Spleen (tissue), 13 donors: ENCODE measurements at regions of chr16 and their contacts with region 1.

Region 1: GRCh38 chr16:8567750-8568617 is 22.3 kb downstream of the TMEM114 start:
- DNase-seq: peak; percentile 86
- H3K4me3 ChIP-seq: no peak overlapping the region
- H3K27ac ChIP-seq: no peak overlapping the region
- H3K4me1 ChIP-seq: peaks cover 0 to 8% (median 4%) of the 10 kb centered on the region in 6 donors
- H3K27me3 ChIP-seq: peaks cover 0 to 39% (median 7%) of the 10 kb centered on the region in 7 donors
- CTCF ChIP-seq: peak; percentile 93 to 98 (median 98)
- POLR2A ChIP-seq: no peak

Region 2: GRCh38 chr16:8880839-8881510 is 313.0 kb after region 1 on chr16:
- intact Hi-C with region 1: loop called (anchors 5 kb)
- DNase-seq: peak; percentile 19
- H3K4me3 ChIP-seq: no peak overlapping the region
- H3K27ac ChIP-seq: no peak overlapping the region
- H3K4me1 ChIP-seq: peaks cover 0 to 23% (median 11%) of the 10 kb centered on the region in 6 donors
- H3K27me3 ChIP-seq: peaks cover 0 to 39% (median 0%) of the 10 kb centered on the region in 7 donors
- CTCF ChIP-seq: no peak
- POLR2A ChIP-seq: no peak

Region 3: DNA sequence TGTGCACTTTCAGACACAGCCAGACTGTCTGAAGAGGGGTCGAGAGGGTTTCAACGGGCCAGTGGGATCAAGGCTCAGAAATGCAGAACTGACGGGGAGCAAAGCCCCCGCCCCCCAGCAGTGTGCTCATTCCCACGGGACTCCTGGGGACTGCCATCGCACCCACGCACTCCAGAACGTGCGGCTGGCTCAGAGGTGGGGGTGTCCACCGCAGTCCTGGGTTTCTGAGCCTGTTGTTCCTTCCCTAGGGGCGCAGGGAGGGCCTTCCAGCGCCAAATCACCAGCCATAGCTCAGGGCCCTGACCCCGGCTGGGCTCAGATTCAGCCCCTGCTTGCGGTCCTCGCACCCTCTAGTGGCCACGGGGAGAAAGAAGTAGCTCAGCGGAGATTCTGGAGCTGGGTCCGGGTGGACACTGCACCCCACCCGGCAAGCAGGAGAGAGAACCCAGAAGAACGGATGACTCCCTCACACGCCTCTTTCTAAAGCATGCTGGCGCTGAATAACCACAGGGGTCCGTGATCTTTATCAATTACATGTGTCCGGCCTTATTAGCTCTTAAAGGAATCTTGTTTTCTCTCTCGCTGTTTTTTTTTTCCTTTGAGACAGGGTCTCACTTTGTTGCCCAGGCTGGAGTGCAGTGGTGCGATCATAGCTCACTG is 440.7 kb after region 1 on chr16:
- intact Hi-C with region 1: loop called (anchors 10 kb)
- DNase-seq: peak; percentile 91
- H3K4me3 ChIP-seq: peak overlapping the region in 3 of 8 donors; percentile 16 to 54 (median 19)
- H3K27ac ChIP-seq: no peak overlapping the region
- H3K4me1 ChIP-seq: peaks cover 6 to 13% (median 9%) of the 10 kb centered on the region in 6 donors
- H3K27me3 ChIP-seq: peaks cover 0 to 43% (median 3%) of the 10 kb centered on the region in 7 donors
- CTCF ChIP-seq: peak; percentile 57 to 83 (median 70)
- POLR2A ChIP-seq: no peak